AG04450 (cell line): ENCODE measurements at regions of chr5 and their contacts with region 1.

Region 1: DNA sequence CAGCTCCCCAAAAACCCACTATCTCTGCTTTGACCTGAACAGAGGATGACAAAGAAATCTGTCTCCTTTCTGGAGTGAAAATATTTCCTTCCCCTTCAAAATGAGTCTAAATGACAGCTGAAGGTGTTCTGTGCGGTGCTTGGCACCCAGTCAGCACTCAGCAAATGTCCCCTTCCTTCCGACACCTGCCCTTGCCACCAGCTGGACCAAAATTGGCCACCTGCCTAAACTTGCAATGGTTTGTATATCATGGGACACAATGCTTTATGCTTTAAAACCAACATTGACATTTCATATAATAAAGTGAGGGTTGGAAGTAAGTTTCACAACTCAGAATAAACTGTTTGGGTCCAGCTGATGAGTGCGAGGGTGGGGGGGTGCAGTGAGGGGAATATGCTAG is 7.5 kb upstream of the TTC1 start:
- DNase-seq: no peak
- H3K4me3 ChIP-seq: no peak overlapping the region
- H3K27ac ChIP-seq: no peak overlapping the region
- H3K27me3 ChIP-seq: peaks cover 2% of the 10 kb centered on the region
- CTCF ChIP-seq: no peak

Region 2: GRCh38 chr5:159628703-159629102 is 372.8 kb before region 1 on chr5:
- CTCF ChIA-PET with region 1: no interaction called
- POLR2A ChIA-PET with region 1: no interaction called
- DNase-seq: no peak
- H3K4me3 ChIP-seq: no peak overlapping the region
- H3K27ac ChIP-seq: no peak overlapping the region
- H3K27me3 ChIP-seq: peaks cover 7% of the 10 kb centered on the region
- CTCF ChIP-seq: no peak

Region 3: GRCh38 chr5:159833088-159833487 is 168.4 kb before region 1 on chr5:
- CTCF ChIA-PET with region 1: no interaction called
- POLR2A ChIA-PET with region 1: no interaction called
- DNase-seq: no peak
- H3K4me3 ChIP-seq: no peak overlapping the region
- H3K27ac ChIP-seq: no peak overlapping the region
- H3K27me3 ChIP-seq: no peaks in the 10 kb centered on the region
- CTCF ChIP-seq: no peak

Region 4: DNA sequence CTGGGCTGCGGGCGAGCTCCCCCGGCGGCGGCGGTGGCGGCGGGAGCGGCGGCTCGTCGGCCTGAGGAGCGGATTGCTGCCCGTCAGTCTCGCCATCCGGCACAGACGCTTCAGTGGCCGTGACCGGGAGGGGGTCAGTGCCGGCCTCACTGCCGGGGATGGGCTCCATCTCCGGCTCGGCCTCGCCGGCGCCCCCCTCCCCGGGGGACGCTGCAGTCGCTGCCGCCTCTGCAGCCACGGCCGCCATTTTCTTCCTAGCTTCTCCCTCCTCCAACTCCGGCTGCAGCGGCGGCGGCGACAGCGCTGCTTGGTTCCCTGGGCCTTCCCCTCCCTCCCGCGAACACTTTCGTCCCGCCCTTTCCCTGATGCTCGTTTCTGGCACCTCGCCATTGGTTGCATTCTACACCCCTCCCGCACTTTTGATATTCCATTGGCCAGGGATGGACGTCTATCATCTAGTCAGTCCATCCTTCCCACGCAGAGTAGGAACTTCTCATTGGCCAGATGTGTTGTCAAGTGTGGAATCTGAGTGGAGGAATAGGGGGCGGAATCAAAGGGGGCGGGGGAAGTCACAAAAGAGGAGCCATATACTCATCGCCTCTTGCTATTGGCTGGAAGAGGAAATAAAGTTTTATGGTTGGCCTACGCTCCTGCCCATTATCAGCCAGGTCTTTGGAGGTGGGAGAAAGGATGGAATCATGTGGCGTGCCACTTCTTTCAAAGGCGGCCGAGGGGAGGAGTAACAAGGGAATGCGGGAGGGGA is 117.9 kb after region 1 on chr5 and contains the start of gene PWWP2A:
- CTCF ChIA-PET with region 1: no interaction called
- POLR2A ChIA-PET with region 1: no interaction called
- DNase-seq: peak; percentile 100
- H3K4me3 ChIP-seq: peak within 1 kb of the TSS; percentile 92
- H3K27ac ChIP-seq: peak within 1 kb of the TSS; percentile 57
- H3K27me3 ChIP-seq: no peaks in the 10 kb centered on the region
- CTCF ChIP-seq: no peak
- polyA plus RNA-seq, gene PWWP2A: 14.8 and 15.1 TPM in 2 replicates

Region 5: GRCh38 chr5:160269017-160269416 is 267.6 kb after region 1 on chr5:
- CTCF ChIA-PET with region 1: no interaction called
- POLR2A ChIA-PET with region 1: no interaction called
- DNase-seq: peak; percentile 56
- H3K4me3 ChIP-seq: no peak overlapping the region
- H3K27ac ChIP-seq: peak overlapping the region; percentile 39
- H3K27me3 ChIP-seq: no peaks in the 10 kb centered on the region
- CTCF ChIP-seq: no peak

Region 6: DNA sequence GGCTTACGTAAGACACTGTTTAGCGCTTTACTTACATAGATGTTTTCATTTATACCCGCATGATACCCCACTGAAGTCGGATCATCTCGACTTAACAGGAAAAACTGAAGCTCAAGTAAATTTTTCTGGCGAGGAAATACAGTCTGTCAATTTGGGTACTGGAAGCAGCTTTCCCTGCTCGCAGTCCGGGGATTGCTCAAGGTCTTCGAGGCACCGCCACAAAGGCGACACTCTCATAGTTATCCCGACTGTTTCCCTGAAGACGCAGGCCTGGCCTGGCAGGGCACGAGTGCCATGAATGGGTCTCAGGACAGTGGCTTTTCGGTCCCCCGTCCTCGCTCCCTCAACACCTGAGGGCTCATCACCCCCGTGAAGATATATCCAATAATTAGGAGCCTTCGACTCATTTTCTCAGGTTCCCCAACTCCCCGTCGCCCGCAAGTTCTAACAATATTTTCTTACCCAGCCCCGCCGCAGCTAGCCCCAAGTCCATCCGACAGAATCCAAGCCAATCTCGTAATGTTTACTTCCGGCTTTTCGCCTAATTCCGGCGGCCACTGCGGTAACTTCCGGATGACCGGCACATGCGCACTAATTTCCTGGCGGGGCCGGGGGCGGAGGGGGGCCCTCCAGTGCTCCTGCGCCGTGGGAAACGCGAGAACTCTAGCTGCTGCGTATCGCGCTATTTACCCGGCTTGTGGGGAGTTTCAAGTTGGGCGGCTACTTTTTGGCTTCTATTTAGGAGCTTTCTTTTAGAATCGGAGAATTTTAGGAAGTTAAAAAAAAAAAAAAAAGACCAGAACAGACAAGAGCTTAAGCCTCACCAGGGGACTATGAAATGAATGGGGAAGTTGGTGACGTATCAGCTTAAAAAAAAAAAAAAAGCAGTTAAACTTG is 417.4 kb after region 1 on chr5 and contains the start of gene SLU7:
- CTCF ChIA-PET with region 1: interaction called, 8 read pairs
- POLR2A ChIA-PET with region 1: interaction called, 10 read pairs
- DNase-seq: peak; percentile 92
- H3K4me3 ChIP-seq: peak within 1 kb of the TSS; percentile 99
- H3K27ac ChIP-seq: peak within 1 kb of the TSS; percentile 58
- H3K27me3 ChIP-seq: no peaks in the 10 kb centered on the region
- CTCF ChIP-seq: no peak
- polyA plus RNA-seq, gene SLU7: 32.9 and 59.5 TPM in 2 replicates